Activated CD4-positive, alpha-beta T cell treated with anti-CD3 and anti-CD28 coated beads, Interleukin-2, amount 10 ng/mL, durations not matched to agents 24 days and 14 days (primary cell): ENCODE measurements at regions of chr16 and their contacts with region 1.

Region 1: GRCh38 chr16:87956365-87957231 is 5.4 kb downstream of the BANP start:
- DNase-seq: peak; percentile 93
- H3K4me3 Mint-ChIP-seq: peak overlapping the region; percentile 93
- H3K27ac Mint-ChIP-seq: peak overlapping the region; percentile 99
- H3K4me1 Mint-ChIP-seq: peaks cover 72% of the 10 kb centered on the region
- H3K27me3 Mint-ChIP-seq: no peaks in the 10 kb centered on the region

Region 2: DNA sequence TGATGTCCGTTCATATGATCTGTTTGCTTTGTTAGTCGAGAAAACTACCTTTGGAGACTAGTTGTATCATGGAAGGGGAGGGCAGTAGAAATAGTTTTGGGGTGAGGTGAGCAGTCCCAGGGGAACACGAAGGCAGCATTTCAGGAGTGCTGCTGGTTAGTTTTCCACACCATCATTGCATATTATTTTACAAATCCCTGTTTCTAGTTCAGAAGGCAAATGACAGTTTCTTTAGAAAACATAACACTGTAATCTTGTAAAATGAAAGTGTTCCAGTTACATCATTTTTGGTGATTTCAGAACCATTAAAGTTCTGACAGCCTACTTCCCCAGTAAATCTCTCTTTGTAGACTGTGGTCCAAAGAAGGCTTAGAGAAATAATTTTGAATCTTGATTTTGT is 20.1 kb after region 1 on chr16:
- intact Hi-C with region 1: loop called (anchors 2 kb)
- DNase-seq: no peak
- H3K4me3 Mint-ChIP-seq: no peak overlapping the region
- H3K27ac Mint-ChIP-seq: peak overlapping the region; percentile 2
- H3K4me1 Mint-ChIP-seq: peaks cover 33% of the 10 kb centered on the region
- H3K27me3 Mint-ChIP-seq: no peaks in the 10 kb centered on the region

Region 3: DNA sequence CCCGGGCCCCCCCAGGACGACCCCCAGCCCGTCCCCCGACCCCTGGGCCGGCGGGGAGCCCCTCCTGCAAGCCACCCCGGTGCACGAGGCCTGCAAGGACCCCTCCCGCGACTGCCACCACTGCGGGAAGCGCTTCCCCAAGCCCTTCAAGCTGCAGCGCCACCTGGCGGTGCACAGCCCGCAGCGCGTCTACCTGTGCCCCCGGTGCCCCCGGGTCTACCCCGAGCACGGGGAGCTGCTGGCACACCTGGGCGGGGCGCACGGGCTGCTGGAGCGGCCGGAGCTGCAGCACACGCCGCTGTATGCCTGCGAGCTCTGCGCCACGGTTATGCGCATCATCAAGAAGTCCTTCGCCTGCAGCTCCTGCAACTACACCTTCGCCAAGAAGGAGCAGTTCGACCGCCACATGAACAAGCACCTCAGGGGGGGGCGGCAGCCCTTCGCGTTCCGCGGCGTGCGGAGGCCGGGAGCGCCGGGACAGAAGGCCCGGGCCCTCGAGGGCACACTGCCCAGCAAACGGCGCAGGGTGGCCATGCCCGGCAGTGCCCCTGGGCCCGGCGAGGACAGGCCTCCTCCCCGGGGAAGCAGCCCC is 480.9 kb after region 1 on chr16:
- intact Hi-C with region 1: loop called (anchors 5 kb)
- DNase-seq: peak; percentile 90
- H3K4me3 Mint-ChIP-seq: no peak overlapping the region
- H3K27ac Mint-ChIP-seq: no peak overlapping the region
- H3K4me1 Mint-ChIP-seq: no peaks in the 10 kb centered on the region
- H3K27me3 Mint-ChIP-seq: no peaks in the 10 kb centered on the region

Region 4: DNA sequence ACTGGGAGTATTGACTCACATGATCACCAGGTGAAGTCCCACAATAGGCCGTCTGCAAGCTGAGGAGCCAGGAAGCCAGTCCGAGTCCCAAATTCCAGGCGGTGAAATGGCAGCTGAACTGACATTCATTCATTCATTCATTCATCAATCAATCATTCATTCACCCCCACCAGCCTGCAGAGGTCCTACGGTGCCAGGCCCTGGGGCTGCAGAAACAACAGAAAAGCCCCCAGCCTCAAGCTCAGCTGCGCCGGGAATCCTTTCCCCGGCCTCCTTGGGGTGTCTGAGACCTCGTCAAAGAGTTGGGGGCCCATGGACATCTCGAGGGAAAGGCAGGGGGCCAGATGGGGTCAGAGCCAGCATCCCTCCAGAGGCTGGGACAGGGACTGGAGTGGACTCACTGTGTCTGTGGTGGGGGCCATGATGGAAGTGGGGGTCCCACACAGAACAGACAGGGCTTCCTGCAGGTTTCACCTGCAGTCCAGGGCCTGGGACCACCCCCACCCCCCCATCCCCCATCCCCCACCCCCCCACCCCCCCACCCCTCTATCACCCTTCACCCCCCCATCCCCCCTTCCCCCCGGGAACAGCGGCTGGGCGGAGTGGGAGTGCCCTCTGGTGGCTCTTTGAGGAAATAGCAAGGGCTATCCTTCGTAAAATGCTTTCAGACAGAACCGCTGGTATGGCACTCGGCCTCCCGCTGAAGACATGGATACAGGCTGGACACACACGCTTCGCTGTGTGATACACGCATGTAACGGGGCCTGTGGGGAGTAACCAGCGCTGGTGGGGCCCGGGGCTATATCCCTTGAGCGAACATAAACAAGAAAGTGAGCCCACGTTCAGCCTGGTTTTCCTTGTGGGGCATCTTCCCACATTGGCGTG is 605.1 kb after region 1 on chr16:
- intact Hi-C with region 1: loop called (anchors 5 kb)
- DNase-seq: peak; percentile 83
- H3K4me3 Mint-ChIP-seq: no peak overlapping the region
- H3K27ac Mint-ChIP-seq: no peak overlapping the region
- H3K4me1 Mint-ChIP-seq: peaks cover 15% of the 10 kb centered on the region
- H3K27me3 Mint-ChIP-seq: no peaks in the 10 kb centered on the region